ENCODE measurements at regions of chr7 and their contacts with region 1.

Region 1: DNA sequence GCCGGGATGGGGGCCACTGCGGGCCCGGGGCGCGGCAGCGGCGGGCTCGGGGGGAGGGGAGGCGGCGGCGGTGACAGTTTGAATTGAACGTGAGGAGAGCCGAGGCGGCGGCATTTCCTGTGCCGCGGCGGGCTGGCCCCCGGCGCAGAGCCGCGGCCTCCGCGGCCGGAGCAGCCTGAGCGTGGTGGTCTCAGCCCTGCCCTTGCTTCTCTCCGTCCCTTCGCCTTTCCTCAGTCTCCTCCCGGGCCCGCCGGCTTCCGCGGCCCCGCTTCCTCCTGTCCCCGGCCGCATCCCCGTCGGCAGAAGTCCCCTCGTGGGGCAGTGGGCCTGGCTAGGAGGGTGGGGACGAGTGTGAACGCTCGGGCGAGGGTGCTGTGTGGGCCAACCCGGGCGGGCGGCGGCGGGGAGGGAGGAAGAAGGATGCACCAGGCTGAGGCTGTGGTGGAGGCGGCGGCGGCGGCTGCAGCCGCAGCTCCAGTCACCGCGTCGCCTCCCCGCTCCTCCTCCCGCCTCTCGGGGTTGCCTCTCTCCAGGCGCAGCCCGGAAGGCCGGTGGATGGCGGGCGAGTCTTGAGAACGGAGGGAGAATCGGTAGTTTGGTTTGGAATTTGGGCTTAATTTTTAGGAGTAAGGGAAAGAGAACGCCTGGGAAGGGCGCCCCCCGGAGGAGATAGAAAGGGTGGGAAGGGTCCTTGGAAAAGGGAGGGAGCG is 690 bp downstream of the SEPTIN7 start:
- DNase-seq: peak; percentile 81
- H3K4me3 ChIP-seq: peak overlapping the region; percentile 89
- H3K27ac ChIP-seq: peak overlapping the region; percentile 90
- H3K4me1 ChIP-seq: peaks cover 47% of the 10 kb centered on the region
- CTCF ChIP-seq: peak; percentile 80

Region 2: GRCh38 chr7:35571611-35572240 is 229.8 kb before region 1 on chr7:
- CTCF ChIA-PET with region 1: no interaction called
- POLR2A ChIA-PET with region 1: no interaction called
- intact Hi-C with region 1: no loop called
- DNase-seq: no peak
- H3K4me3 ChIP-seq: no peak overlapping the region
- H3K27ac ChIP-seq: no peak overlapping the region
- H3K4me1 ChIP-seq: peaks cover 7% of the 10 kb centered on the region
- CTCF ChIP-seq: no peak

Region 3: GRCh38 chr7:35707422-35707821 is 94.1 kb before region 1 on chr7:
- CTCF ChIA-PET with region 1: interaction called, 5 read pairs
- POLR2A ChIA-PET with region 1: interaction called, 22 read pairs
- intact Hi-C with region 1: loop called (anchors 1 kb)
- DNase-seq: no peak
- H3K4me3 ChIP-seq: no peak overlapping the region
- H3K27ac ChIP-seq: no peak overlapping the region
- H3K4me1 ChIP-seq: peaks cover 21% of the 10 kb centered on the region
- CTCF ChIP-seq: no peak

Region 4: GRCh38 chr7:35729061-35729783 is 72.3 kb before region 1 on chr7:
- CTCF ChIA-PET with region 1: interaction called, 23 read pairs
- POLR2A ChIA-PET with region 1: interaction called, 196 read pairs
- intact Hi-C with region 1: loop called (anchors 1 kb)
- DNase-seq: peak; percentile 94
- H3K4me3 ChIP-seq: peak overlapping the region; percentile 65
- H3K27ac ChIP-seq: peak overlapping the region; percentile 100
- H3K4me1 ChIP-seq: peaks cover 97% of the 10 kb centered on the region
- CTCF ChIP-seq: no peak

Region 5: GRCh38 chr7:35768346-35768745 is 33.2 kb before region 1 on chr7:
- CTCF ChIA-PET with region 1: no interaction called
- POLR2A ChIA-PET with region 1: no interaction called
- intact Hi-C with region 1: no loop called
- DNase-seq: no peak
- H3K4me3 ChIP-seq: no peak overlapping the region
- H3K27ac ChIP-seq: no peak overlapping the region
- H3K4me1 ChIP-seq: no peaks in the 10 kb centered on the region
- CTCF ChIP-seq: no peak

Region 6: GRCh38 chr7:35816514-35816913 is 15.0 kb after region 1 on chr7:
- CTCF ChIA-PET with region 1: interaction called, 7 read pairs
- POLR2A ChIA-PET with region 1: interaction called, 16 read pairs
- intact Hi-C with region 1: no loop called
- DNase-seq: no peak
- H3K4me3 ChIP-seq: no peak overlapping the region
- H3K27ac ChIP-seq: no peak overlapping the region
- H3K4me1 ChIP-seq: peaks cover 7% of the 10 kb centered on the region
- CTCF ChIP-seq: no peak

Region 7: GRCh38 chr7:35849158-35849831 is 47.7 kb after region 1 on chr7:
- CTCF ChIA-PET with region 1: no interaction called
- POLR2A ChIA-PET with region 1: no interaction called
- intact Hi-C with region 1: no loop called
- DNase-seq: no peak
- H3K4me3 ChIP-seq: no peak overlapping the region
- H3K27ac ChIP-seq: no peak overlapping the region
- H3K4me1 ChIP-seq: no peaks in the 10 kb centered on the region
- CTCF ChIP-seq: peak; percentile 61

Region 8: GRCh38 chr7:35906191-35906908 is 104.8 kb after region 1 on chr7:
- CTCF ChIA-PET with region 1: interaction called, 3 read pairs
- POLR2A ChIA-PET with region 1: no interaction called
- intact Hi-C with region 1: loop called (anchors 5 kb)
- DNase-seq: peak; percentile 82
- H3K4me3 ChIP-seq: no peak overlapping the region
- H3K27ac ChIP-seq: no peak overlapping the region
- H3K4me1 ChIP-seq: peaks cover 3% of the 10 kb centered on the region
- CTCF ChIP-seq: peak; percentile 97

Region 9: GRCh38 chr7:36280840-36281812 is 479.6 kb after region 1 on chr7:
- CTCF ChIA-PET with region 1: no interaction called
- POLR2A ChIA-PET with region 1: no interaction called
- intact Hi-C with region 1: loop called (anchors 10 kb)
- DNase-seq: no peak
- H3K4me3 ChIP-seq: no peak overlapping the region
- H3K27ac ChIP-seq: no peak overlapping the region
- H3K4me1 ChIP-seq: peaks cover 50% of the 10 kb centered on the region
- CTCF ChIP-seq: no peak

Measured in OCI-LY7 (cell line).